Posterior vena cava (tissue), 2 donors: ENCODE measurements at regions of chr11 and their contacts with region 1.

Region 1: GRCh38 chr11:20795005-20795404 is 125.6 kb downstream of the NELL1 start:
- DNase-seq: no peak

Region 2: DNA sequence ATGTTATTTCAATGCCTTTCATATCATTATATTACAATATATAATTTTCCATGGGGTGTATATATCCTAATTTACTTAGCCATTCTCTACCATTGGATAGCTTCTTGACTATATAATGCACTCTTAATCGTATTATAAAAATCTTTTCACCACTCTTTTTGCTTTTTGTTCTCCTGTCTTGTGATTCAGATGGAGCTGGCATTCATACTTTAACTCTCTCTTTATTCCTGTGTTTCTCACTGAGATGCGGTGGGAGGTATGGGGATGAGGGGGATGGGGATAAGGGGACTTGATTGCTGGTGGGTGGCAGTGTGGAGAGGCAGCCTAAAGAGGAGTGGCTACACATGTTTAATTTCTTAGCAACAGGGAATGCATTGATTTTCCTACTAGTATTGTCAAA is 19.7 kb before region 1 on chr11:
- intact Hi-C with region 1: no loop called
- DNase-seq: no peak

Region 3: GRCh38 chr11:20835561-20835960 is 40.6 kb after region 1 on chr11:
- intact Hi-C with region 1: no loop called
- DNase-seq: no peak

Region 4: DNA sequence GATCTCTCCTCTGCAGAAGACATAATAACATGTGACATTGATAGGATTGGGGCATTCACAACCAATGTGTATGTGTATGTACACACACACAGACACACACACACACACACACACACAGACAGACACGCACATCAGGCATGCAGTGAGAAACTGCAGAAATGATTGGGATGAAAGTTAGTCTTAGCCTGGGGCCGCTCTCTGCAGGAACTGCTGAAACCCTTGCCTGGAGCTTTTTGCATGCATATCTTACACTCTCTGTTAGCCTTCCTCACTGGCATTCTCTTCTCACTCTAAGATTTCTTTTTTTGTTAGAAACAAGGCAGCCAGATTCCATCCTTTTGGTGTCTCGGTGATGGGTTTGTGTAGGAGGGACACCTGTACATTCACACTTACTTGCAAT is 212.3 kb after region 1 on chr11:
- intact Hi-C with region 1: no loop called
- DNase-seq: no peak

Region 5: DNA sequence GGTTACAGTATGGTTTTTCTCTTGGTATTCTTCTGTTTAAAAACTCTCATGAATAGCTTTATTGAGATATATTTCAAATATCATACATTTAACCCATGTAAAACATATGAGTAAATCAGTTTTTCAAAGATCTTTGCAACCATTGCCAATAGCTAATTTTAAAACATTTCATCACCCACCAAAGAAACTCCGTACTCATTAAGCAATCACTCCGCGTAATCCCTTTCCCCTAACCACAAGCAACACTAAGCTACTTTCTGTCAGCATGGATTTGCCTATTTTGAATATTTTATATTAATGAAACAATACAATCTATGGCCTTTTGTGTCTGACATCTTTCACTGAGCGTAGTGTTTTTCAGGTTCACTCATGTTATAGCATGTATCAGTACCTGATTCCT is 699.9 kb after region 1 on chr11:
- intact Hi-C with region 1: no loop called
- DNase-seq: no peak

Region 6: GRCh38 chr11:22130462-22131053 is 1335.6 kb after region 1 on chr11:
- intact Hi-C with region 1: loop called in 1 of 2 experiments (anchors 5 kb)
- DNase-seq: no peak